PC-3 (cell line): ENCODE measurements at regions of chr15 and their contacts with region 1.

Region 1: GRCh38 chr15:38072348-38073177 is 138.1 kb downstream of the TMCO5A start:
- DNase-seq: peak; percentile 82
- ATAC-seq: peak; percentile 55
- H3K4me3 ChIP-seq: peak overlapping the region; percentile 68
- H3K27ac ChIP-seq: peak overlapping the region; percentile 91
- H3K4me1 ChIP-seq: peaks cover 65% of the 10 kb centered on the region
- H3K27me3 ChIP-seq: no peaks in the 10 kb centered on the region
- CTCF ChIP-seq: peak; percentile 59

Region 2: GRCh38 chr15:38002883-38003477 is 69.6 kb before region 1 on chr15:
- CTCF ChIA-PET with region 1: no interaction called
- POLR2A ChIA-PET with region 1: no interaction called
- intact Hi-C with region 1: loop called (anchors 2 kb)
- DNase-seq: peak; percentile 80
- ATAC-seq: peak; percentile 95
- H3K4me3 ChIP-seq: no peak overlapping the region
- H3K27ac ChIP-seq: no peak overlapping the region
- H3K4me1 ChIP-seq: 0 out of 2 replicates have a peak, but pooled peaks cover 4% of the 10 kb centered on the region
- H3K27me3 ChIP-seq: no peaks in the 10 kb centered on the region
- CTCF ChIP-seq: peak; percentile 91

Region 3: GRCh38 chr15:38129531-38130204 is 57.1 kb after region 1 on chr15:
- CTCF ChIA-PET with region 1: no interaction called
- POLR2A ChIA-PET with region 1: no interaction called
- intact Hi-C with region 1: loop called (anchors 1 kb)
- DNase-seq: peak; percentile 99
- ATAC-seq: peak; percentile 86
- H3K4me3 ChIP-seq: peak overlapping the region; percentile 63
- H3K27ac ChIP-seq: peak overlapping the region; percentile 96
- H3K4me1 ChIP-seq: peaks cover 47% of the 10 kb centered on the region
- H3K27me3 ChIP-seq: no peaks in the 10 kb centered on the region
- CTCF ChIP-seq: no peak

Region 4: GRCh38 chr15:38354315-38354929 is 281.9 kb after region 1 on chr15:
- CTCF ChIA-PET with region 1: no interaction called
- POLR2A ChIA-PET with region 1: no interaction called
- intact Hi-C with region 1: loop called (anchors 1 kb)
- DNase-seq: peak; percentile 87
- ATAC-seq: peak; percentile 85
- H3K4me3 ChIP-seq: no peak overlapping the region
- H3K27ac ChIP-seq: no peak overlapping the region
- H3K4me1 ChIP-seq: no peaks in the 10 kb centered on the region
- H3K27me3 ChIP-seq: no peaks in the 10 kb centered on the region
- CTCF ChIP-seq: peak; percentile 91

Region 5: DNA sequence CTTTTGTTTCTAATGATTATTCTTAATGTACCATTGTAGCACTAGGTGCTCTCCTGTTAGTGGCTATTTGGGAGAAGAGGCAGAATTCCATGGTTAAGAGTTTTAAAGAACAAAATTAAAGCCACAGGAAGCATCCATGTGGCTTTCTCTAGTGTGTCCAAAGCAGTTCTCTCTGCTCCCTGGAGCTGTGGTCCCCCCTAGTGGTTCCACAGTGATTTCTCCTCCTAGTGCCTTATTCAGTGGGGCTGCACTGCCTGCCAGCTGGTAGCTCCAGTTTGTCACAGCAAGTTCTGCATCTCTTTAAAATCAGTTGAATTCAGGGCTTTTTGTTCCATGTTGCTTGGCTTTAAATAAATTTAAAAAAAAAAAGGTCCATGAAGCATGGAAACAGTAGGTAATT is 341.8 kb after region 1 on chr15:
- CTCF ChIA-PET with region 1: no interaction called
- POLR2A ChIA-PET with region 1: interaction called, 6 read pairs
- intact Hi-C with region 1: loop called (anchors 5 kb)
- DNase-seq: peak; percentile 76
- ATAC-seq: peak; percentile 100
- H3K4me3 ChIP-seq: no peak overlapping the region
- H3K27ac ChIP-seq: no peak overlapping the region
- H3K4me1 ChIP-seq: no peaks in the 10 kb centered on the region
- H3K27me3 ChIP-seq: peaks cover 25% of the 10 kb centered on the region
- CTCF ChIP-seq: peak; percentile 93